ENCODE measurements at regions of chr7 and their contacts with region 1.

Region 1: DNA sequence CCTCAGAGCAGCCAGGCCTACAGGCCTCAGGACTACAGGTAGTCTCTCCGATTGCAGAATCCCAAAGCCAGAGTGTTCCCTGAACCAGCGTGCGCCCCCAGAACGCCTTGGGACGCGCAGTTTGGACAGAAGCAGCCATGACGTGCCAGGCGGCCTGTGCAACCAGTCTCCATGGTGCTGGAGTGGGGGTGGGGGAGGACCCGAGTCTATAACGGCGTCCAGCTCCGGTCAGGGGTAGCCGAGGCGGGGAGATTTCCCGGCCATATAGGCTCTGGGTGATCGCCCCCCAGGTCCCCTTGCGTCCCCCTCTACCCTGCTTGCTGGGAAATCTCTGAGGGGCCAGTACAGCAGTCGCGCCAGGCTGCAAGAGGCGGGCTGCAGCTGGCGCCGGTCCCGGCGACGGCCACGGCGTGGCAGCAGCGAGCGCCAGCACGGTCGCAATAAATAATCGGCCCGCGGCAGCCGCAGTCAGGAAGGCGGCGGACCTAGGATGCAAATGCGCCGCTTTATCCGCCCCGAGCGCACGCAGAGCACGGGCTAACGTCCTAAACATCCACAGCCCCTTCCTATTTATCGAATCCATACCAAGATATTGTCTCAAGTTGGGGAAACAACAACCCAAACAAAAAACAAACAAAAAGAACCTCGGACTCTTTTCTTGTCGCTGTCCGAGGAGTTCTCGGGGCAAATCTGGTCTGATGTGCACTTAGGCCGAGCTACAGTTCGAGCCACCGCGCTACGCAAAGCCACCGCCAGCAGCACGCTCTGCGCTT is 1.6 kb downstream of the HOXA3 start:
- DNase-seq: peak in 1 of 2 donors; percentile 66
- ATAC-seq: peak; percentile 62 to 85 (median 78)
- H3K4me3 ChIP-seq: peak overlapping the region in 9 of 10 donors; percentile 16 to 47 (median 30)
- H3K27ac ChIP-seq: no peak overlapping the region
- H3K4me1 ChIP-seq: peaks cover 0 to 58% (median 31%) of the 10 kb centered on the region in 9 donors
- H3K27me3 ChIP-seq: peaks cover 63 to 100% (median 100%) of the 10 kb centered on the region in 7 donors
- CTCF ChIP-seq: peak; percentile 60 to 87 (median 80)

Region 2: DNA sequence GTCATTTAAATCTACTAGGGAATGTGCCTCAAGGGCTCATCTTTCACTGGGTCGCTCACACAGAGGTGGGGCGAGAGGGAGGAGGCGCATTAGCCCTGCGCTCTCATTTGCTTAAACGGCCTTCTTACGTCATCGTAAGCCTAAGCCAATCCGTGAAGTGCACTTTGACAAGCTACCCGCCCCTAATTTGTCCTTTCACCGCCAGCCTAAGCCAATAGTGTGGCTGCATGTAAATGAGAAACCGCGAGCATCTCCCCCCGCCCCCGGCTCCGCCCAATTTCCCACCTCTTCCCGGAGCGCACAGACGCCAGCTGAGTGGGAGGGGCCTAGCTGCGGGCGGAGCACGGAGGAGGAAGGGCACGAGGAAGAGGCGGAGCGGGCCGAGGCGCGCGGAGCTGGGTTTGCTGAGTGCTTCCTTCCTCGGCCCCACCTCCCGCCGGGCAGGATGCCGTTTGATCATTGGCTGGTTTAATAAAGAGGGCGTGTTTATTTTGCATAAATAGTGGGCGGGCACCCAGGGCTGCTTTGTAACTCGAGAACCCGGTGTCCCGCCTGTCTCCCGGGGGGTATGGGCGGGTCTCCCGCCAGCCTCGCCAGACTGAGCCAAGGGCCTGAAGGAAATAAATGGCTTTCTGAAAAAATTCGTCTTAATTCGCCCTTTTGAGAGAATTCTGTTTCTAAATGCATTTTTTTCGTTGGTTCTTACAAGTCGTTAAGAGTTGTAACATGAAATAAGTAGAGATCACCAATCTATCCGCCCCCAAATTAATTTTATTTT is 1288.3 kb before region 1 on chr7:
- intact Hi-C with region 1: loop called in 2 of 10 experiments (anchors 10 kb)
- DNase-seq: peak; percentile 76 to 78
- ATAC-seq: peak; percentile 78 to 95 (median 90)
- H3K4me3 ChIP-seq: peak overlapping the region in 2 of 10 donors; percentile 2 to 22
- H3K27ac ChIP-seq: no peak overlapping the region
- H3K4me1 ChIP-seq: peaks cover 0 to 31% (median 14%) of the 10 kb centered on the region in 9 donors
- H3K27me3 ChIP-seq: peaks cover 53 to 100% (median 100%) of the 10 kb centered on the region in 7 donors
- CTCF ChIP-seq: no peak

Region 3: GRCh38 chr7:26853788-26854393 is 296.9 kb before region 1 on chr7:
- intact Hi-C with region 1: loop called in 1 of 10 experiments (anchors 10 kb)
- DNase-seq: no peak
- ATAC-seq: no peak
- H3K4me3 ChIP-seq: no peak overlapping the region
- H3K27ac ChIP-seq: no peak overlapping the region
- H3K4me1 ChIP-seq: peaks cover 0 to 16% (median 0%) of the 10 kb centered on the region in 9 donors
- H3K27me3 ChIP-seq: peaks cover 0 to 73% (median 58%) of the 10 kb centered on the region in 7 donors
- CTCF ChIP-seq: peak; percentile 16 to 65 (median 52)

Region 4: GRCh38 chr7:27095897-27096767 is 54.6 kb before region 1 on chr7 and contains the start of gene HOXA1:
- intact Hi-C with region 1: no loop called
- DNase-seq: peak in 1 of 2 donors; percentile 16
- ATAC-seq: peak in 7 of 8 donors; percentile 63 to 83 (median 73)
- H3K4me3 ChIP-seq: peak within 1 kb of the TSS; percentile 52 to 87 (median 57)
- H3K27ac ChIP-seq: peak within 1 kb of the TSS in 9 of 10 donors; percentile 19 to 92 (median 65)
- H3K4me1 ChIP-seq: peaks cover 0 to 41% (median 27%) of the 10 kb centered on the region in 9 donors
- H3K27me3 ChIP-seq: peaks cover 17 to 100% (median 100%) of the 10 kb centered on the region in 7 donors
- CTCF ChIP-seq: no peak
- total RNA-seq, gene HOXA1: 0.15 to 0.37 TPM in 2 of 10 donors, not detected in the others

Region 5: GRCh38 chr7:27199849-27200760 is 49.4 kb after region 1 on chr7 and contains the start of gene HOXA13:
- intact Hi-C with region 1: no loop called
- DNase-seq: no peak
- ATAC-seq: peak in 4 of 8 donors; percentile 18 to 55 (median 32)
- H3K4me3 ChIP-seq: peak within 1 kb of the TSS in 8 of 10 donors; percentile 14 to 44 (median 31)
- H3K27ac ChIP-seq: no peak within 1 kb of the TSS
- H3K4me1 ChIP-seq: peaks cover 0 to 42% (median 24%) of the 10 kb centered on the region in 9 donors
- H3K27me3 ChIP-seq: peaks cover 51 to 98% (median 97%) of the 10 kb centered on the region in 7 donors
- CTCF ChIP-seq: no peak
- total RNA-seq, gene HOXA13: not detected

Measured in heart right ventricle (tissue), 16 donors.